ENCODE measurements at regions of chr7 and their contacts with region 1.

Region 1: DNA sequence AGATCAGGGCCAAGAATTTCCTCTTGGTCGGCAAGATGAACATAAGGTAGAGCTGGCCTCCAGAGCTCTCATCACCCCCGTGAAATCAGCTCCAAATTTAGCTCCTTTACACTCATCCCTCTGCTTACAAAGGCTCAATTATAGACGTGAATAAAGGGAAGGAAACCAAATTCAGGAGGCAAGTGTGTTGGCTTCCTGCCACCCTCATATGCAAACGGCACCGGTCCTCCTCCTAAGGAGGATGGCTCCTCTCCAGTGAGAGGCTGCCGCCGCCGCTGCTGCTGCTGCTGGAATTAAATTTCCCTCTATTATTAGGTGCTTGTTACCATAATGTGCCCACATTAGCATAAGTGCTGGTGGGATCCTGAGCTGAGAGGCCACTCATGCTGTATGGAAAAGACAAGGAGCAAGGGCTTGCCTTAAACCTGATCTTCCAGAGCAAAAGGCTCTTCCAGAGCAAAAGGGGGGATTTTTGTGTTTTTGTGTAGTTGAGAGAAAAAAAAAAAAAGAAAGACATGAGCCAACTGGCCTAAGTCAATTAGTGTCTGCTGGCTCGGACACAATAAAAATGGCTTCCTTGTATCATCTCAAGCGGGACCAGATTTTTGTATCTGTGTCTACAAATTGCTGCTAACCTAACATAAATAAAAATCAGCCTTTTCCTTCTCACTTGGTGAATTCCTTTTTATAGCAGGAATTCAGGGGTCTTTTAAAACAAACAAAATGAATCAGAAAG is 68.4 kb downstream of the CDHR3 start:
- DNase-seq: no peak
- H3K4me3 ChIP-seq: no peak overlapping the region; a peak in 1 of 8 replicates
- H3K27ac ChIP-seq: no peak overlapping the region
- H3K4me1 ChIP-seq: peaks cover 0 to 16% (median 5%) of the 10 kb centered on the region in 4 experiments; a peak in 5 of 7 replicates
- H3K27me3 ChIP-seq: no peaks in the 10 kb centered on the region
- CTCF ChIP-seq: no peak
- EP300 ChIP-seq: no peak
- POLR2A ChIP-seq: no peak
- RAD21 ChIP-seq: no peak

Region 2: DNA sequence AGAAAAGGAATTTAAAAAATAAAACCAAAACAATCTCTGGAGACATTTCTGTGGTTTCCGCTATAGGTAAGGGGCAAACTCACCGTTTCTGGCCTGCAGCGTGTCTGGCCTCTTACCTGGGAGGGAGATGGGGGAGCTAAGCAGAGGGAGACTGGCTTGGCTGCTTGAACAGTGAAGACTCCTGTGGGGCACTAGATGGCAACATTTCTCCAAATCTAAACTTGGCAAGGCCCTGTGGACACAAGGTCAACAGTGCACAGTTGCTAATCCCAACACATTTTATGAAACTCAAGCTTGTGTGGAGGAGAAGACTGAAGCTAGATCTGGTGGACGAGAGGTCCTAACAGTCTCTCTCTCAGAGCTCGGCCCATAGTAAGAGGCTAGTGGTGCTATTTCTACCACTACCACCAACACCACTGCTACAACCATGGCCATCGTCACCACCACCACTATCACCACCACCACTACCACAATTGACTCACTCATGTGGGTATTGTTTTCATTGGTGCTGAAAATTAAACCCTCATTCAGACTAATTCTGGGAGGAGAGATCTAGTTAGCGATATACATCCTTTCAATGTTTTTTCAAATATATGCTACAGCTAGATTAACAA is 96.8 kb before region 1 on chr7:
- CTCF ChIA-PET with region 1: interaction called, 119 read pairs
- POLR2A ChIA-PET with region 1: no interaction called
- DNase-seq: peak in 1 of 2 experiments; percentile 38
- H3K4me3 ChIP-seq: no peak overlapping the region
- H3K27ac ChIP-seq: no peak overlapping the region
- H3K4me1 ChIP-seq: peaks cover 0 to 4% (median under 1%) of the 10 kb centered on the region in 4 experiments; a peak in 2 of 7 replicates
- H3K27me3 ChIP-seq: no peaks in the 10 kb centered on the region
- CTCF ChIP-seq: peak; percentile 48 to 80 (median 78)
- EP300 ChIP-seq: no peak
- POLR2A ChIP-seq: no peak
- RAD21 ChIP-seq: peak; percentile 91 to 94

Region 3: DNA sequence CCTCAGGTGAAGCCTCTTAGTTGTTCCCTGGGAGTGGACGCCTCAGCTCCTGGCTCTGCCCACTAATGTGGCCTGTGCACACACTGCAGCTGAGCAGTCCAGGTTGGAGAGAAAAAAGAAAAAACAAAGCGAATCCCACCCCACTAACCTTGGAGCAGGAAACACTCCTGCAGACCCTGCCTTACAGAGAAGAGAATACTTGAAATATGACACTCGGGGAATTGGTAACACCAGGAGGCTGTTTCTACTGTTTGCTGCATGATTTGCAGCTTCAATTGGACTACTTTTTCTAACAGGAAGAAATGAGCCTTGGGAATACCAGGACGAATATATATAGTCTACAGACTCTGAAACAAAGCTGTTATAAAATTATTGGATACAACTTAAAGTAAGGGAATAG is 46.2 kb before region 1 on chr7:
- CTCF ChIA-PET with region 1: interaction called, 19 read pairs
- POLR2A ChIA-PET with region 1: no interaction called
- DNase-seq: no peak
- H3K4me3 ChIP-seq: no peak overlapping the region
- H3K27ac ChIP-seq: no peak overlapping the region
- H3K4me1 ChIP-seq: peaks cover 8 to 35% (median 32%) of the 10 kb centered on the region in 4 experiments
- H3K27me3 ChIP-seq: no peaks in the 10 kb centered on the region
- CTCF ChIP-seq: no peak
- EP300 ChIP-seq: no peak
- POLR2A ChIP-seq: no peak
- RAD21 ChIP-seq: no peak

Region 4: GRCh38 chr7:105990726-105991453 is 40.6 kb before region 1 on chr7:
- CTCF ChIA-PET with region 1: interaction called, 19 read pairs
- POLR2A ChIA-PET with region 1: no interaction called
- DNase-seq: peak; percentile 68 to 72
- H3K4me3 ChIP-seq: no peak overlapping the region
- H3K27ac ChIP-seq: no peak overlapping the region; the same call in 1 of the 2 replicates
- H3K4me1 ChIP-seq: peaks cover 11 to 34% (median 28%) of the 10 kb centered on the region in 4 experiments; a peak in 6 of 7 replicates
- H3K27me3 ChIP-seq: no peaks in the 10 kb centered on the region
- CTCF ChIP-seq: peak; percentile 37 to 76 (median 73)
- EP300 ChIP-seq: 0 out of 3 replicates have a peak, but pooled peaks of 1 of the 2 experiments have one; percentile 16
- POLR2A ChIP-seq: no peak
- RAD21 ChIP-seq: peak; percentile 40 to 49

Region 5: DNA sequence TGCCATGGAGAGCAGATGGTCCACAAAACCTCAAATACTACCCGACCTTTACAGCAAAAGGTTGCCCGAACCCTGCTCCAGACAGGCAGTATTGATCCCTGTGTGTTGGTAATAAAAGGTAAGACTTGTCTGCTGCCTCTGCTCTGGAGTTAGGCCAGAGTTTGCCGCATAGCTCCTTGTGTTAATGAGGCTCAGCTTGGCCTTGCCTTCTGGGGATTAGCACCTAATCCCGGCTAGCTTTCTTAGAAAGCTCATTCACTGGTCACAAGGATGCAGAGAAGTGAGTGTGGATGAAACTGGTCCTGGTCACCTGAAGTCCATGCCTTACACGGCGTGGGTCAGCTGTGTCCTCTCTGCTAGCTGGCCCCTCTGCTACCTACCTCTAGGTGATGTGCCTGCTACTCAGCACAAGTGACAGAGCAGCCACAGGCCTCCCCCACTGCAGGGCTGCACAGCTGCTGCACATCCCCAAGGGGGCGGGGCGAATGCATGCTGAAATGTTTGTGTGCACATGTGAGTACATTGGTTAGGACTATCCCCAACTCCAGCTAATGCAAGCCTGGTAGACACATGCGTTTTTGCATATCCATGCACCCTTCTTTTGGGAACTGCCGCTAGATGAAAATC is 112.4 kb after region 1 on chr7:
- CTCF ChIA-PET with region 1: no interaction called
- POLR2A ChIA-PET with region 1: no interaction called
- DNase-seq: no peak
- H3K4me3 ChIP-seq: no peak overlapping the region
- H3K27ac ChIP-seq: no peak overlapping the region
- H3K4me1 ChIP-seq: peaks cover 0 to 4% (median 1%) of the 10 kb centered on the region in 4 experiments; a peak in 2 of 7 replicates
- H3K27me3 ChIP-seq: no peaks in the 10 kb centered on the region
- CTCF ChIP-seq: peak in 1 of 3 experiments; percentile 21; a peak in 1 of 4 replicates
- EP300 ChIP-seq: no peak
- POLR2A ChIP-seq: no peak
- RAD21 ChIP-seq: no peak